ENCODE measurements at regions of chr17 and their contacts with region 1.

Region 1: DNA sequence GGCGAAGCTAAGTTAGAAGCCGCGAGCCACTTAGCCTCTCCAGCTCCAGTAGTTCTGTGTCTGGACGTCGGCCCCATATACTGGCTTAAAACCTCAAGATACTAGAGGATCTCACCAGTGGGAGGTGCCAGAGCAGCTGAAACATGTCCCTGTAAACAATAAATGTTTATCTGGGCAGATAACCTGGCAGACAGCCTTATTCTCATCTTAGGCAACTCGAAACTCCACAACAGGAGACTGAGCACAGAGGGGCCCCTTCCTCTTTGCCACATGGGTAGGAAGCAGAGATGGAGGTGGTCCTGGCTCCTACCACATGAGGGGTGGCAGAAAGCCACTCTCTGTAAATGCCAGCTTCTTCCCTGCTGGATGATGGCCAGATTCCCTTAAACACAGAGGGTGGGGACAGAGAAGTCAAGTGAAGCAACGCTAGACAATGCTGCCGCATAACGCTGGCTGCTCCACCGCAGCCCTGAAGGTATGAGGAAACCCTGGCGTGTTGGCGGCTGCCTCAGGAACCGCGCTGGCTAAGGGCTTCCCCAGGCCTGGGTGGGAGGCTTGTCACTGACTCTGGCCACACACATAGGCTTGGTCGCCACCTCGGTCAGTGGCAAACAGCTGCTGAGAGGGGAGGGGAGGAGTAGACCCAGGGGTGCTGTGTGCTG is 67.9 kb downstream of the HIC1 start:
- DNase-seq: peak; percentile 73
- H3K4me3 ChIP-seq: no peak overlapping the region
- H3K27ac ChIP-seq: peak overlapping the region; percentile 0
- H3K4me1 ChIP-seq: peaks cover 24% of the 10 kb centered on the region
- H3K27me3 ChIP-seq: no peaks in the 10 kb centered on the region
- CTCF ChIP-seq: no peak
- POLR2A ChIP-seq: no peak

Region 2: GRCh38 chr17:2144701-2145100 is 21.9 kb after region 1 on chr17:
- CTCF ChIA-PET with region 1: interaction called, 15 read pairs
- POLR2A ChIA-PET with region 1: interaction called, 3 read pairs
- dilution Hi-C with region 1: no loop called
- intact Hi-C with region 1: no loop called
- DNase-seq: no peak
- H3K4me3 ChIP-seq: no peak overlapping the region
- H3K27ac ChIP-seq: no peak overlapping the region
- H3K4me1 ChIP-seq: no peaks in the 10 kb centered on the region
- H3K27me3 ChIP-seq: no peaks in the 10 kb centered on the region
- CTCF ChIP-seq: no peak
- POLR2A ChIP-seq: no peak

Region 3: GRCh38 chr17:2212385-2212981 is 89.7 kb after region 1 on chr17:
- CTCF ChIA-PET with region 1: no interaction called
- POLR2A ChIA-PET with region 1: no interaction called
- dilution Hi-C with region 1: no loop called
- intact Hi-C with region 1: no loop called
- DNase-seq: no peak
- H3K4me3 ChIP-seq: no peak overlapping the region
- H3K27ac ChIP-seq: no peak overlapping the region
- H3K4me1 ChIP-seq: peaks cover 46% of the 10 kb centered on the region
- H3K27me3 ChIP-seq: no peaks in the 10 kb centered on the region
- CTCF ChIP-seq: no peak
- POLR2A ChIP-seq: no peak

Measured in endothelial cell of umbilical vein (primary cell).